Naive thymus-derived CD8-positive, alpha-beta T cell (primary cell): ENCODE measurements at regions of chr5 and their contacts with region 1.

Region 1: GRCh38 chr5:140401362-140402257 is at the start of gene ANKHD1:
- DNase-seq: peak; percentile 90 to 99 (median 98)
- ATAC-seq: peak; percentile 79 to 84
- H3K4me3 Mint-ChIP-seq: no peak within 1 kb of the TSS
- H3K27ac Mint-ChIP-seq: peak within 1 kb of the TSS in 2 of 10 donors; percentile 89 to 94
- H3K4me1 Mint-ChIP-seq: peaks cover 20 to 46% (median 38%) of the 10 kb centered on the region in 4 donors
- H3K27me3 Mint-ChIP-seq: no peaks in the 10 kb centered on the region
- polyA plus RNA-seq, gene ANKHD1: 54.9 to 82.8 (median 63.8) TPM

Region 2: GRCh38 chr5:140157032-140157803 is 244.4 kb before region 1 on chr5:
- POLR2A ChIA-PET with region 1: no interaction called
- DNase-seq: peak; percentile 73 to 91 (median 82)
- ATAC-seq: peak; percentile 100
- H3K4me3 Mint-ChIP-seq: peak overlapping the region in 9 of 10 donors; percentile 6 to 66 (median 44)
- H3K27ac Mint-ChIP-seq: peak overlapping the region in 3 of 10 donors; percentile 31 to 54 (median 47)
- H3K4me1 Mint-ChIP-seq: peaks cover 4 to 10% (median 8%) of the 10 kb centered on the region in 4 donors
- H3K27me3 Mint-ChIP-seq: peaks cover 0 to under 1% (median 0%) of the 10 kb centered on the region in 5 donors

Region 3: GRCh38 chr5:140547508-140548299 is 146.1 kb after region 1 on chr5 and contains the start of gene EIF4EBP3:
- POLR2A ChIA-PET with region 1: interaction called, 21 read pairs
- DNase-seq: peak; percentile 80 to 92 (median 87)
- ATAC-seq: peak; percentile 92 to 95
- H3K4me3 Mint-ChIP-seq: peak within 1 kb of the TSS; percentile 81 to 96 (median 93)
- H3K27ac Mint-ChIP-seq: peak within 1 kb of the TSS; percentile 94 to 99 (median 98)
- H3K4me1 Mint-ChIP-seq: peaks cover 13 to 36% (median 35%) of the 10 kb centered on the region in 4 donors
- H3K27me3 Mint-ChIP-seq: no peaks in the 10 kb centered on the region
- polyA plus RNA-seq, gene EIF4EBP3: 50.4 to 79.6 (median 71.5) TPM

Region 4: GRCh38 chr5:140639148-140639979 is 237.8 kb after region 1 on chr5 and contains the start of gene TMCO6:
- POLR2A ChIA-PET with region 1: interaction called, 12 read pairs
- DNase-seq: peak; percentile 85 to 98 (median 94)
- ATAC-seq: peak; percentile 93 to 97
- H3K4me3 Mint-ChIP-seq: peak within 1 kb of the TSS; percentile 87 to 96 (median 92)
- H3K27ac Mint-ChIP-seq: peak within 1 kb of the TSS; percentile 85 to 100 (median 98)
- H3K4me1 Mint-ChIP-seq: peaks cover 23 to 47% (median 44%) of the 10 kb centered on the region in 4 donors
- H3K27me3 Mint-ChIP-seq: no peaks in the 10 kb centered on the region
- polyA plus RNA-seq, gene TMCO6: 11.5 to 20.5 (median 13.9) TPM

Region 5: DNA sequence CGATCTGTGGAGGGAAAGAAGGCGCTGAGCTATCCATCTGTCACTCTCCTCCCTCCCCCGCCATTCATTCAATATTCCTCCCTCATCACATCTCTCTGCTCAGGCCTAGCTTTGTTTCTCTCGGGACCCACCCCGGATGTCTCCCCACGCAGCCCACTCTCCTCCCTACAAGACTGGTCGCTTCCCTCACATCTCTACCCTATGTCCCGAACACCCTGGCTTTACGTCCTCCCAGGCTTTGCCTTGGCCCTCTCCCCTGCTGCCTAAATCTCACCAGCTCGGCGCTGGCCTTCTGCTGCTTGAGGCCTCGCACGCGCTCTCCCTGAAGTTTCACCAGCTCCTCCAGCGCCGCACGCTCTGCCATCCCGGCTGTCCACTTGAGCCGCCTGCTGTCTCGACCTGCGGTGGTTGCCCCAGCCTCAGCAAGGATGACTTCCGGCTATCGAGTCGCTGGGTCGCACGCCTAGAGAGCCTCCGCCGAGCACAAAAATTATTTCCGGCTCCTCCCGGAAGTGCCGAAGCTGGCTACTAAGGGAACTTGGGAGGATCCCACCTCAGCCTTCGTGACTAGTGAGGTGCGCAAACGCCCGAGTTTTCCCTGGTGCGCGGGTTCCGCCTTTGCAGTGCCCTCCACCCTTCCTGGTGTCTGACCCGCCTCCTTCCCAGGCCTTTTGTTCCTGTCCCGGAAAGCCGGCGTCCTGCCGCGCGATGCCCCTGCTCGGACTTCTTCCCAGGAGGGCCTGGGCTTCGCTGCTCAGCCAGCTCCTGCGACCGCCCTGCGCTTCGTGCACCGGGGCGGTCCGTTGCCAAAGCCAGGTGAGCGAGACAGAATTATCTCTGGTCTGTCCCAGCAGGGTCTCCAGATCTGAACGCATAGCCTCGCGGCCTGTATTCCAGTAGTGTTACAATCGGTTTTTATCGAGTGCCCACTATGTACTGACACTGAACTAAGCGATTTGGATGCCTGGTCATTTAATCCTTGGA is 289.6 kb after region 1 on chr5 and contains the starts of genes HARS1 and HARS2:
- POLR2A ChIA-PET with region 1: interaction called, 16 read pairs
- DNase-seq: peak; percentile 60 to 87 (median 77)
- ATAC-seq: peak; percentile 92 to 94
- H3K4me3 Mint-ChIP-seq: peak within 1 kb of the TSS; percentile 99 to 100 (median 99)
- H3K27ac Mint-ChIP-seq: peak within 1 kb of the TSS; percentile 90 to 99 (median 98)
- H3K4me1 Mint-ChIP-seq: peaks cover 14 to 49% (median 46%) of the 10 kb centered on the region in 4 donors
- H3K27me3 Mint-ChIP-seq: no peaks in the 10 kb centered on the region
- polyA plus RNA-seq, gene HARS1: 63.2 to 77.5 (median 65.3) TPM
- polyA plus RNA-seq, gene HARS2: 15.4 to 24.6 (median 20.1) TPM

Region 6: GRCh38 chr5:140710899-140711552 is 309.4 kb after region 1 on chr5:
- POLR2A ChIA-PET with region 1: interaction called, 24 read pairs
- DNase-seq: peak; percentile 36 to 95 (median 86)
- ATAC-seq: peak; percentile 86 to 87
- H3K4me3 Mint-ChIP-seq: peak overlapping the region; percentile 93 to 100 (median 99)
- H3K27ac Mint-ChIP-seq: peak overlapping the region; percentile 97 to 100 (median 98)
- H3K4me1 Mint-ChIP-seq: peaks cover 11 to 24% (median 18%) of the 10 kb centered on the region in 4 donors
- H3K27me3 Mint-ChIP-seq: no peaks in the 10 kb centered on the region